Posterior cingulate gyrus (tissue), 11 donors: ENCODE measurements at regions of chr15 and their contacts with region 1.

Region 1: DNA sequence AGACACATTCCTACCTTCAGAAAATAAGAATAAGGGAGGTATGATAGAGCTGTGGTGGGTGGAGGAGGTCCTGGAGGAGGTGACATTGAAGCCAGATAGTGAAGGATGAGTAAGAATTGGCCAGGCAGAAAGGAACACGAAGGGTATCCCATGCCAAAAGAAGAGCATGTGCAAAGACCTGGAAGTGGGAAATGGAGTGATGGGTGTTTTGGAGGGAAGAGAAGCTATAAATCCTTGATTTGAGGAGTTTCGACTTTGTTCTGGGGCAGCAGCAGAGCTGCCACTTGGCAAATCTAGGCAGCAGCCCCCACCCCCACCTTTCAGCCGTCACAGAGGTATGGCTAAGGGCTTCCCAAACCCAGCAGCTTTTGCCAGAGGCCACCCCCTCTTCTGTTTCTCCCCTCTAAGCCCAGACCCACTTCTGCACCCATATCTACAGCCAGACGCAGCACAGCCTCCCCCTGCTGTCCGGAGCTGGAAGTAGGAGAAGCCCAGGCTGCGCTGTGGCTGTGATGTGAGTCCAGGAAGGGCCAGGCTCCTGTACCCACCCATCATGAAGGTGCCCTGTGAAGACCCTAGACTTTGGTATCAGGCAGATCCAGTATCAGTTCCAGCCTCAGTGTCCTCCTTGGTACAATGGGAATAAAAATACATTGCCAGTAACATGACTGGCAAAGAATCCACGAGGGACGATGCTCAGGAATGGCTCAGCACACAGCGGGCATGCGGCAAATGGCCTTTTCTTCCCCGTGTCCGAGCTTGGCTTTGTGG is 188.7 kb upstream of the LINGO1 start:
- DNase-seq: peak; percentile 66 to 97 (median 83)

Region 2: DNA sequence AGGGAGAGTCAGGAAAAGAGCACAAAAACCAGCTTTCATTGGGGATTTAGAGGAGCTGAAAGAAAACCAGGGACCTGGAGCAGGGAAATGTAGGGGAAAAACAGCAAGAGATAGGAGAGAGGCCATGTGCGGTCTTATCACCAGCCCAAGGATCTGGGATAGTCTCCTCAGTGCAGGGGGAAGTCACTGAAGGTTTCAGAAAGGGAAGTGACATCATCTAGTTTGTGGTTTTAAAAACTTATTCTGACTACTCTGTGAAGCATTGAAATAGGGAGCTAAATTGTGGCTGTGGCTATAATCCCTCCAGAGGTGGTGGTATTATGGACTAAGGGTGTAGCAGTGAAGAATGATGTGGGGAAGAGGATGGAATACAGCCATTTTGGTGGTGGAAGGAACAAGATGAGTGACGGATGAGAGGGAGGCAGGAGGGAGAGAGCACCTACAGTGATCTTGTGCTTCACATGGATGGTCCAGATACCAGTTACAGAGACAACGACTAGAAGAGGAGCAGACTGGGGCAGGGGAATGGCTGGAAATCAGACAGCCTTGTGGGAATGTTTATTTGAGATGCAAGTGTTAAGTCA is 328.0 kb before region 1 on chr15:
- intact Hi-C with region 1: no loop called
- DNase-seq: no peak

Region 3: DNA sequence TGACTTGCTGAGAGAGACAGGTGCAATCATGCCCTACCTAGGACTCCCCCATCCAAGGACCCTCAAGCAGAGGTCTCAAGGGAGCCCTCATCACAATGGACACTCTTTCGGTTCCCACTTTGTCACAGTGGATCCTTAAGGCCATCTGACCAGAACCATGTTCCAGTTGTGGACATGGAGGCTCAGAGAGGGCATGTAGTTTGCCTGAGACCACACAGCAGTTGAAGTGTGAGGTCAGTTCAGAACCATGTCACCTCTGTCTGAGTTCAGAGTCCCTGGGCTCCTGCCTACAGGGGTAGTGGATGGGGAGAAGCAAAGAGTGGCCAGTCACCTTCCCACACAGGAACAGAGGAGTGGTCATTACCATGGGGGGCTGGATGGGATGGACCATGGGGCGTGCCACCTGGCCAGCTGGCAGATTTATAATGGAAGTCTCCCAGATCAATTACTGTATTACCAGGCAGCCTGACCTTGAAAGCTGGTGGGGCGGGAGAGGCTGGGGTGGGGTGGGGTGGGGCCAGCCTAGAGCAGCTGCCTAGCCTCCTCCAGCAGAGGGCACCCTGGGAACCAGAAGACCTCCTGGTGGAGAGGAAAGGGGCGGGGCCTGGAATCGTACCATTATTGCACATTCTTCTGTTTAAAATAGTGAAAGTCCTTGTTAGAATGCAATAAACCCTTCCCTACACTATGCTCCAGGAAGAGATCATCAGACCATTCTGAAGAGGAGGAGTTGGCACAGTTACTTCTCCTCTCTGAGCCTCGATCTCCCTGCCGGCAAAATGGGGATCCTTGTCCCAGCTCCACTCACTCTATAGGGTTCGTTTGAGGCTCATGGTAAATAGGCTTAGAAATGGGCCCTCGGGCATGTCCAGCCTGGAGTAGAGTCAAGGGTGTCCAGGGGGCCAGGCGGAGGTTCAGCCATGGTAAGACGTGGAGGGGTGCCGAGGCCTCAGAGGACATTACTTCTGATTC is 161.7 kb before region 1 on chr15:
- intact Hi-C with region 1: loop called (anchors 5 kb)
- DNase-seq: peak in 6 of 10 donors; percentile 37 to 91 (median 65)

Region 4: GRCh38 chr15:77727635-77728304 is 93.6 kb before region 1 on chr15:
- intact Hi-C with region 1: no loop called
- DNase-seq: no peak

Region 5: DNA sequence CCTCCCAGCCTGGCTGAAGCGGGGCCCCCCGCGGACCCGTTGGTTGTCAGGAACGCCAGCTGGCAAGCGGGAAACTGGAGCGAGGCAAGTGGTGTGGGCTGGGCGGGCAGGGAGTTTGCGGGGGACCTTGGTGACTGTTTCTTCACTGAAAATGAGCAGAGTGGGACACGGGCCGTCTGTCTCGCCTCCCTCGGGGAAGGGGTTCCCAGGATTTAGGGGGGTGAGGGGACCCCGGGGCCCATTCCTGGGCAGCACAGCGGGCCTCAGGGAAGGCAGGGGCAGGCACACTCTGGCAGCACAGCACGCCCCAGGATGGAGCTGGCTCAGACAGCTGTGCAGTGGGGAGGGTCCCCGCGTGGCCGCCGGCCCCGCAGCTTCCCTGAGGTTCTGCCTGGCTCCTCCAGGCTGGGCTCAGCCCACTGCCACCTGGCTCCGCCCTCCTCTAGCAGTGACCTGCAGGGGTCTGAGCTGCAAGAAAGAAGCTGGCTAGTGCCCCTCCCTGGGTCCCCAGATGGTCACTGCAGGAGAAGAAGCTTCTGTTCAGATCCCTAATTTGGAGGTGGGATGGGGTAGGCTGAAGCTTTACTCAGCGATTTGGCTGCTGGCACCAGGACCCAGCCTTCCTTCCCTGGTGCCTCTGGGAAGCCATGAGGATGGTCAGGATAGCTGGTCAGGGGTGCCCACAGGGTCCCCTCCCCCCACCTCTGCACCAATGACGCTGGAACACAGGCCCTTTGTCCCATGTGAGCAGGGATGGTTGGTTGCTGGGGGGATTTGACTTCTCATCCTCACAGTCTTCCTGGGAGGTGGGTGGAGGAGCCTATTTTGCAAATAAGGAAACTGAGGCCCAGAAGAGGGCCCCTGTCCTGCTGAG is 165.8 kb after region 1 on chr15:
- intact Hi-C with region 1: no loop called
- DNase-seq: peak in 2 of 10 donors; percentile 72 to 73